GM18951 (cell line): ENCODE measurements at regions of chr12 and their contacts with region 1.

Region 1: DNA sequence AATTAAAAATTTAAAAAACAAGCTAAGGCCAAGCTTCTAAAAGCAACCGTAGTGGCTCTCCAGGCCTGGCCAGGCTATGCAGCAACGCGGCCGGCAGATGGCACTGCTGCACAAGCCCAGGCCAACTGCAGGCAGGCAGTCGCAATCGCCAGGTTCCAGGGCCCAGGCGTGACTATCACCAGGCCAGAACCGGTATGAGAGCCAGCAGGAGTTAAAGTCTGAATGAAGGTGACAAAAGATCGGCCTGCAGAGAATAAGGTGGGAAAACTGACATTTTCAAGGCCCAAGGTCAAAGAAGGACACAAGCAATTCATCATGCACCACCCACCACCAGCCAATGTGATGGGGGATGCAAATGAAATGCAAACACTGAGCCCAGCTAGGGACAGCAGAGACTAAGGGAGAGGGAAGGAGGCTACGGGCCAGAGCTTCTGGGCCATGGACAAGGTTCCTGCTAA is 43.6 kb upstream of the ANO2 start:
- POLR2A ChIP-seq: no peak

Region 2: DNA sequence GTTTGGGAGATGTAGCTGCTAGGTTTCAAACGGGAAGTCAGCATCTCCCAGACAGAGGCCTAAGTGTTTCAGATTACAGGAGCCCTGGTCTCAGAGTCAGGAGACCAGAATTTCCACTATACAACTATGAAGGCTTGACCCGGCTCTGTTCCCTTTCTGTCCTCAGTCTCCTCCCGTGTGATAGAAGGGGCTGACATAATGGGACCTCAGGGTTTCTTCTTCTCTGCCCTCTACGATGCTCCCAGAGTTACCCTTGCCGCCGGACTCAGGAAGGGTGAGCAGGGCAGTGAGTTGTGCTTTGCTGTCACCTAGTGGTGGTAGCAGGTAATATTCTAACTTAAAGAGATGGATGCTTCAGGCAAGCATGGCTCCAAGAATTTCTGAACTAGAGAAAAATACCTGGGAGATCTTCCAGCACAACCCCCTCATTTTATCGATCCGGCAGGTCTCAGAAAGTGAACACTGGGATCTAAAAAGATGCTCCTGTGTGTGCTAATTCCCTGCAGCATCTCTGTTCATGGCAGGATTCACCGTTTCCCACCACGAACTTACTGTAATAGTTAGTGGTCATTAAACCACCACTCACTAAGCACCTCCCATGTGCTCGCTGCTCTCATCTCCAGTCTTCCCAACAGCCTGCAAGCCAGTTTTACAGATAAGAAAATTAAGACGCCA is 51.3 kb after region 1 on chr12:
- in situ Hi-C with region 1: loop called (anchors 5 kb)
- POLR2A ChIP-seq: no peak